ENCODE measurements at regions of chr7 and their contacts with region 1.

Region 1: GRCh38 chr7:53475776-53476175 is 440.3 kb downstream of the POM121L12 start:
- DNase-seq: no peak
- ATAC-seq: no peak

Region 2: GRCh38 chr7:53418834-53419482 is 56.8 kb before region 1 on chr7:
- intact Hi-C with region 1: loop called (anchors 2 kb)
- DNase-seq: no peak
- ATAC-seq: no peak